ENCODE measurements at regions of chr2 and their contacts with region 1.

Region 1: GRCh38 chr2:98385050-98385699 is 38.9 kb downstream of the CNGA3 start:
- DNase-seq: peak; percentile 53 to 89
- H3K4me3 ChIP-seq: no peak overlapping the region
- H3K27ac ChIP-seq: no peak overlapping the region
- H3K4me1 ChIP-seq: peaks cover 0 to 5% (median 2%) of the 10 kb centered on the region in 4 experiments; a peak in 3 of 7 replicates
- H3K27me3 ChIP-seq: no peaks in the 10 kb centered on the region
- CTCF ChIP-seq: peak; percentile 98 to 100 (median 99)
- EP300 ChIP-seq: no peak
- POLR2A ChIP-seq: no peak
- RAD21 ChIP-seq: peak; percentile 100

Region 2: GRCh38 chr2:98311721-98312120 is 73.5 kb before region 1 on chr2:
- CTCF ChIA-PET with region 1: interaction called, 15 read pairs
- POLR2A ChIA-PET with region 1: no interaction called
- DNase-seq: peak in 1 of 2 experiments; percentile 78
- H3K4me3 ChIP-seq: no peak overlapping the region
- H3K27ac ChIP-seq: no peak overlapping the region
- H3K4me1 ChIP-seq: peaks cover 0 to 3% (median 0%) of the 10 kb centered on the region in 4 experiments; a peak in 3 of 7 replicates
- H3K27me3 ChIP-seq: no peaks in the 10 kb centered on the region
- CTCF ChIP-seq: peak; percentile 44 to 63 (median 54)
- EP300 ChIP-seq: no peak
- POLR2A ChIP-seq: no peak
- RAD21 ChIP-seq: peak; percentile 41 to 67; a peak in 3 of 4 replicates

Measured in H1 (cell line).